SK-N-SH (cell line): ENCODE measurements at regions of chr6 and their contacts with region 1.

Region 1: GRCh38 chr6:116268589-116269293 is 11.0 kb downstream of the TSPYL1 start:
- DNase-seq: peak; percentile 76
- H3K4me3 ChIP-seq: no peak overlapping the region; a peak in 1 of 4 replicates
- H3K27ac ChIP-seq: peak overlapping the region; percentile 42 to 63; a peak in 3 of 4 replicates
- H3K4me1 ChIP-seq: peaks cover 5 to 12% of the 10 kb centered on the region in 2 experiments; a peak in 3 of 4 replicates
- H3K27me3 ChIP-seq: no peaks in the 10 kb centered on the region
- CTCF ChIP-seq: peak; percentile 95
- EP300 ChIP-seq: peak in 1 of 2 experiments; percentile 20; a peak in 1 of 4 replicates
- RAD21 ChIP-seq: peak; percentile 84

Region 2: DNA sequence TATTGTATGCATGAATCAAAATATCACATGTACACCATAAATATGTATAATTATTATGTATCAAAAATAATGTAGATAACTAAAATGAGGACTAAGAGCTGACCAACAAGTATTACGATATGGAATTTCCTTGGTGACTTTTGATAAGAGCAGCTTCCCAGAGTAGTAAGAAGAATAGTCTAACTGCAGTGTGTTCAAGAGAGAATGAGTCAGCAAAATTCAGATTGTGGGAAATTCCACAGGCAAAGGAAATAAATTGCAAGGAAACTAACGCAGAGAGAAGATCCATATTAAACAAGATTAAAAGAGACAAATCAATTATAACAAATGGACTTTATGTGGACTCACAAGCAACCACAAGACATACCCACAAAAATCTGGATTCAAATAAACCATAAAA is 234.4 kb before region 1 on chr6:
- CTCF ChIA-PET with region 1: no interaction called
- POLR2A ChIA-PET with region 1: no interaction called
- DNase-seq: no peak
- H3K4me3 ChIP-seq: no peak overlapping the region
- H3K27ac ChIP-seq: no peak overlapping the region
- H3K4me1 ChIP-seq: peaks cover 0 to 5% of the 10 kb centered on the region in 2 experiments; a peak in 2 of 4 replicates
- H3K27me3 ChIP-seq: no peaks in the 10 kb centered on the region
- CTCF ChIP-seq: no peak
- EP300 ChIP-seq: no peak
- RAD21 ChIP-seq: no peak

Region 3: DNA sequence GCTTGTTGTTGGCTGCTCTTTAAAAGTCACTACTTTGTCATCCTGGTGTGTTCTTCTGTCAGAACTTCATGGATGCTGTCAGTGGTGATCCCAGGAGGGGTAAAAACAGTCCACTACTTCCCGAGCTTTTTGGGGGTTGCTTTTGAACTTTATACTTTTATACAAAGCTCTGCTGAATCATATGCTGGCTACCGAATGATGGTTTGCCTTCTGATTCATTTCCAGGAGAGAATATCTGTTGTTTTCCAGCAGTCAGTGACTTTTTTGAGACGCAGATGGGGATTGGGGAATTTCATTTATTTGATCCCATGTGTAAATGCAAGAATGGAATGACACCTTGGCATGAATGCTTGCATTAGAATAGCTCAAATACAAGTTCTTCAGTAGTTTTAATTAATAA is 110.1 kb before region 1 on chr6:
- CTCF ChIA-PET with region 1: no interaction called
- POLR2A ChIA-PET with region 1: no interaction called
- DNase-seq: no peak
- H3K4me3 ChIP-seq: peak overlapping the region in 1 of 2 experiments; percentile 17; a peak in 1 of 4 replicates
- H3K27ac ChIP-seq: peak overlapping the region in 1 of 2 experiments; percentile 82; a peak in 2 of 4 replicates
- H3K4me1 ChIP-seq: no peaks in the 10 kb centered on the region; a peak in 1 of 4 replicates
- H3K27me3 ChIP-seq: no peaks in the 10 kb centered on the region
- CTCF ChIP-seq: no peak
- EP300 ChIP-seq: no peak
- RAD21 ChIP-seq: no peak

Region 4: GRCh38 chr6:116217069-116217468 is 51.7 kb before region 1 on chr6:
- CTCF ChIA-PET with region 1: interaction called, 35 read pairs
- POLR2A ChIA-PET with region 1: no interaction called
- DNase-seq: no peak
- H3K4me3 ChIP-seq: no peak overlapping the region
- H3K27ac ChIP-seq: peak overlapping the region; percentile 0 to 34; a peak in 1 of 4 replicates
- H3K4me1 ChIP-seq: peaks cover 3 to 9% of the 10 kb centered on the region in 2 experiments; a peak in 2 of 4 replicates
- H3K27me3 ChIP-seq: no peaks in the 10 kb centered on the region
- CTCF ChIP-seq: peak; percentile 70
- EP300 ChIP-seq: no peak
- RAD21 ChIP-seq: peak; percentile 58

Region 5: DNA sequence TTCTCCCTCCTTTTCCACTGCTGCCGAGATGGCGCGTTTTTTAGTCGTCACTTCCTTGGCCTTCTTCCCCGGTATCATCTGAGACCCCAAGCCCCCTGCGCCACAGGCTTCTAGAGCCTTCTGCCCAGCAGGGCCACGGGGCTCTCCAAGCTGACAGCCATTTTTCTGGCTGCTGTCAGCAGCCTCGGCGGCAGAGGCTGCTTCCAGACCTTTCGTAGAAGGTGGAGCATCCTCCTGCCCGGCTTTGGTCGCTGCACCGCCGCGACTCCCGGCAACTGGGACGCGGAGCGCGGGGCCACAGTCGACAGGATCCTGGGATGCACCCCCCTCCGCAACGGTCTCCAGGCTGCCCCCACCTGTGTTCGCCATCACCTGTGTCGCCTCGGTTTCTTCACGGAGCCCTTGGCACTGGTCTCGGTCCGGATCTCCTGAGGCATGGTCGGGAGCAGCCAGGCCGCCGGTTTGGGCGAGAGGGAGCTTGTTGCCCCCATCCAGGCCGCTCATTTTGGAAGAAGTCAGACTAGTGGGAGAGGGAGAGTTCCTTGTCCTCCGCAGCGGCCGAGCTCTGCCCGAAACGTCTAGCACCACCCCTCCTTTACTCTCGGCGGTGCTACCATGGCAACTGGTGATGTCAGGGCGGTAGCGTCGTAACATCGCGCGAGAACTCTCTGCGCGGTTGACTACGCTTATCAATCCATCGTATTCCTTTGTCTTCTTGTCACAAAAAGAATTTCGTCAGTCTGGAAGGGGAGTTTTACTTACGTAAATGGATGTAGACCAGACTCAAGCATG is 15.0 kb before region 1 on chr6 and contains the start of gene TSPYL4:
- CTCF ChIA-PET with region 1: interaction called, 39 read pairs
- POLR2A ChIA-PET with region 1: interaction called, 6 read pairs
- DNase-seq: peak; percentile 91
- H3K4me3 ChIP-seq: peak within 1 kb of the TSS; percentile 92 to 99
- H3K27ac ChIP-seq: peak within 1 kb of the TSS; percentile 92 to 97
- H3K4me1 ChIP-seq: peaks cover 19 to 32% of the 10 kb centered on the region in 2 experiments; a peak in 3 of 4 replicates
- H3K27me3 ChIP-seq: no peaks in the 10 kb centered on the region
- CTCF ChIP-seq: no peak
- EP300 ChIP-seq: peak in 1 of 2 experiments; percentile 43; a peak in 1 of 4 replicates
- RAD21 ChIP-seq: no peak
- polyA plus RNA-seq, gene TSPYL4: 29.1 and 44.5 TPM in 2 replicates

Region 6: GRCh38 chr6:116335612-116336215 is 67.0 kb after region 1 on chr6:
- CTCF ChIA-PET with region 1: no interaction called
- POLR2A ChIA-PET with region 1: no interaction called
- DNase-seq: no peak
- H3K4me3 ChIP-seq: no peak overlapping the region
- H3K27ac ChIP-seq: no peak overlapping the region
- H3K4me1 ChIP-seq: no peaks in the 10 kb centered on the region
- H3K27me3 ChIP-seq: no peaks in the 10 kb centered on the region
- CTCF ChIP-seq: no peak
- EP300 ChIP-seq: no peak
- RAD21 ChIP-seq: no peak

Region 7: DNA sequence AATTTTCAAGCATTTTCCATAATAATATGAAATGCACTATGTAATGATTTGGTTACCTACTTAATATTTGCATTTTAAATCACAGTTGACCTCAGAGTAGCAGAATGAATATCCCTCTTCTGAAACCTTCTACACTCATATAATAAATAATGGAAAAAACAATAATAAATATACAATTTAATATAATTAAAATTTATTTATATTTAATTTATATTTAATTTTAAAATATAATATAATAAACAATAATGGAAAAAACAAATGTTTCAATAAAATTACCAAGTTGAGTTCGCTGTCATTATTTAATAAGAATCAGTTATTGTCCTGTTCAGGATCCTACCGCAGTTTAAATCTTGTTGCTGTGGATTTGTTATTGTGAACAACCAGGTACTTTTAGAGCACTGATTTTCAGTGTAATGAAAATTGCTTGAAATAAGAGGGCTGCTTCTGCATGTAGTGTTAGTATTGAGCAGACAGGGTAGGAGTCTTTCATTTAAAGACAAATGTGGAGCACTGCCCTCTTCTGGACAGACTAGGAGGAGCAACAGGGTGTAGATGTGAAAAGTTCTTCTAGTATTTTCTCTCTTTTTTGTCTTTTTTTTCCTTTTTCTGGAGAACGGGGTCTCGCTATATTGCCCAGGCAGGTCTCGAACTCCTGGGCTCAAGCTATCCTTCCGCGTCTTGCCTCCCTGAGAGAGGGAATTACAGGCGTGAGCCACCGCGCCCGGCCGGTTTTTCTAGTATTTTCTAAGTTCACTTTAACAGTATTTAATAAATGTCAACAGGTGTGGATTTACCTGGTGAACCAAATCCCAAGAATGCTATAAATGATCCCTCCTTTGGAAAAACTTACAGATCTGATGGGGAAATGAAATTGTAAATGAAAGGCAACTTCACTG is 263.2 kb after region 1 on chr6:
- CTCF ChIA-PET with region 1: interaction called, 31 read pairs
- POLR2A ChIA-PET with region 1: no interaction called
- DNase-seq: peak; percentile 56
- H3K4me3 ChIP-seq: no peak overlapping the region
- H3K27ac ChIP-seq: no peak overlapping the region
- H3K4me1 ChIP-seq: peaks cover 0 to 21% of the 10 kb centered on the region in 2 experiments; a peak in 2 of 4 replicates
- H3K27me3 ChIP-seq: no peaks in the 10 kb centered on the region
- CTCF ChIP-seq: peak; percentile 73
- EP300 ChIP-seq: no peak
- RAD21 ChIP-seq: peak; percentile 70

Region 8: GRCh38 chr6:116561377-116562018 is 292.8 kb after region 1 on chr6:
- CTCF ChIA-PET with region 1: interaction called, 28 read pairs
- POLR2A ChIA-PET with region 1: no interaction called
- DNase-seq: peak; percentile 70
- H3K4me3 ChIP-seq: no peak overlapping the region; a peak in 1 of 4 replicates
- H3K27ac ChIP-seq: no peak overlapping the region
- H3K4me1 ChIP-seq: peaks cover 2 to 23% of the 10 kb centered on the region in 2 experiments; a peak in 3 of 4 replicates
- H3K27me3 ChIP-seq: no peaks in the 10 kb centered on the region
- CTCF ChIP-seq: peak; percentile 94
- EP300 ChIP-seq: no peak
- RAD21 ChIP-seq: peak; percentile 93

Region 9: GRCh38 chr6:116714761-116715160 is 446.0 kb after region 1 on chr6:
- CTCF ChIA-PET with region 1: no interaction called
- POLR2A ChIA-PET with region 1: no interaction called
- DNase-seq: no peak
- H3K4me3 ChIP-seq: no peak overlapping the region
- H3K27ac ChIP-seq: no peak overlapping the region
- H3K4me1 ChIP-seq: no peaks in the 10 kb centered on the region
- H3K27me3 ChIP-seq: no peaks in the 10 kb centered on the region
- CTCF ChIP-seq: no peak
- EP300 ChIP-seq: no peak
- RAD21 ChIP-seq: no peak